ENCODE measurements at regions of chr10 and their contacts with region 1.

Region 1: DNA sequence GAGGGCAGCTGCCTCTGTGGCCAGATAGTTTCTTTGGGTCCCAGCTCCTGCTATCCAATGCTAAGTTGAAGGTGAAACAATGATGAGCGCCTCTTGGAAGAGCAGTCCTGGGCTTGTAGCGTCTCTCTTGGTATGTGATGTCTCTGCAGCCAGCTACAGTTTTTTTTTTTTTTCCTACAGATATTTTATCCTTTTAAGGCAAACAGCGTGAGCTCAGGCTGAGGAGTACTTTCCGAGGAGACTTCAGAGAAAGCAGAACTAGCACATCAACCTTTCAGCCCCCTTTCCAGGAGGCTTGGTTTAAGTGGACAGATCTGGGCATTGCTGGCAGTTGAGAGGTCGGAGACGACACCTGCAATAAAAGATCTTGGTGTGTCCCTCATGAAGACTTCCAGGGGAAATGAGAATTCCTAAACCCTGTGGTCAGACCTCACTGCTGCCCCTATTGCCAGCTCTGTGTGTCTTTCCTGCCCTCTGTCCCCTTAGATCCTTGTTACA is 9.1 kb downstream of the PRKG1 start:
- DNase-seq: peak; percentile 38
- H3K4me3 ChIP-seq: no peak overlapping the region
- H3K27ac ChIP-seq: no peak overlapping the region
- H3K27me3 ChIP-seq: no peaks in the 10 kb centered on the region
- CTCF ChIP-seq: peak; percentile 30; the same call in 1 of the 2 replicates

Region 2: GRCh38 chr10:51010977-51011376 is 72.4 kb before region 1 on chr10:
- CTCF ChIA-PET with region 1: no interaction called
- POLR2A ChIA-PET with region 1: no interaction called
- DNase-seq: no peak
- H3K4me3 ChIP-seq: no peak overlapping the region
- H3K27ac ChIP-seq: no peak overlapping the region
- H3K27me3 ChIP-seq: no peaks in the 10 kb centered on the region
- CTCF ChIP-seq: peak; percentile 82

Region 3: GRCh38 chr10:51095444-51095843 is 12.0 kb after region 1 on chr10:
- CTCF ChIA-PET with region 1: interaction called, 13 read pairs
- POLR2A ChIA-PET with region 1: no interaction called
- DNase-seq: no peak
- H3K4me3 ChIP-seq: no peak overlapping the region
- H3K27ac ChIP-seq: no peak overlapping the region
- H3K27me3 ChIP-seq: no peaks in the 10 kb centered on the region
- CTCF ChIP-seq: no peak

Region 4: DNA sequence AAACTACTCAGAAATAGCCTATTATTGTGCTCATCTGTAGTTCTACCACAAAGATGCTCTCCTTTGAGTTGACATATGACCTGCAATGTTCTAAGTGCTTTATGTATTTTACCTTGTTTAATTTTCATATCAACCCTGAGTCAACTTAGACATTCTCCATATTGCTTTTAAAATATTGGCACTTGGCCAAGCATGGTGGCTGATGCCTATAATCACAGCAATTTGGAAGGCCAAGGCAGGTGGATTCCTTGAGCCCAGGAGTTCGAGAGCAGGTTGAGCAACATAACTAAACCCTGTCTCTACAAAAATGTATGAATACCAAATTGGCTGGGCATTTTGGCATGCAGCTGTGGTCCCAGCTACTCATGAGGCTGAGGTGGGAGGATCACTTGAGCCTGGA is 41.4 kb after region 1 on chr10:
- CTCF ChIA-PET with region 1: no interaction called
- POLR2A ChIA-PET with region 1: no interaction called
- DNase-seq: no peak
- H3K4me3 ChIP-seq: no peak overlapping the region
- H3K27ac ChIP-seq: no peak overlapping the region
- H3K27me3 ChIP-seq: no peaks in the 10 kb centered on the region
- CTCF ChIP-seq: no peak

Region 5: DNA sequence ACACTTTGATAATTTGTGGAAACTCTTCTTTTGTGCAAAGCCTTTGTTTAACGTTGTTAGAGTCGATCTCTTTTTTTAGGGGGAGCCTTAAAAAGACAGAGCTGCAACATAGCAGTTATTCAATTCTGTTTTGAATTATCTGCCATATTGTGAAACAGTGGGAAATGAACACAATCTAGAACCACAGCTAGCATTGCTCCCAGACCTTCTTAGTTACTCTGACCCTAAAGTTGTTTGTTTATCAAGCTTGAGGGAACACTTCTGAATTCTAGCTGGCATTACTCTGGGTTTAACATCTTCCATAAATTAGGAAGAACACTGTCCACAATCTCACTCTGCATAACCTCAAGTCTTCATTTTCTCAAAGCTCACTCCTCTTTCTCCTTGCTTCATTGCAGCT is 208.6 kb after region 1 on chr10:
- CTCF ChIA-PET with region 1: no interaction called
- POLR2A ChIA-PET with region 1: no interaction called
- DNase-seq: no peak
- H3K4me3 ChIP-seq: no peak overlapping the region
- H3K27ac ChIP-seq: no peak overlapping the region
- H3K27me3 ChIP-seq: no peaks in the 10 kb centered on the region
- CTCF ChIP-seq: no peak